MCF 10A (cell line): ENCODE measurements at regions of chr5 and their contacts with region 1.

Region 1: DNA sequence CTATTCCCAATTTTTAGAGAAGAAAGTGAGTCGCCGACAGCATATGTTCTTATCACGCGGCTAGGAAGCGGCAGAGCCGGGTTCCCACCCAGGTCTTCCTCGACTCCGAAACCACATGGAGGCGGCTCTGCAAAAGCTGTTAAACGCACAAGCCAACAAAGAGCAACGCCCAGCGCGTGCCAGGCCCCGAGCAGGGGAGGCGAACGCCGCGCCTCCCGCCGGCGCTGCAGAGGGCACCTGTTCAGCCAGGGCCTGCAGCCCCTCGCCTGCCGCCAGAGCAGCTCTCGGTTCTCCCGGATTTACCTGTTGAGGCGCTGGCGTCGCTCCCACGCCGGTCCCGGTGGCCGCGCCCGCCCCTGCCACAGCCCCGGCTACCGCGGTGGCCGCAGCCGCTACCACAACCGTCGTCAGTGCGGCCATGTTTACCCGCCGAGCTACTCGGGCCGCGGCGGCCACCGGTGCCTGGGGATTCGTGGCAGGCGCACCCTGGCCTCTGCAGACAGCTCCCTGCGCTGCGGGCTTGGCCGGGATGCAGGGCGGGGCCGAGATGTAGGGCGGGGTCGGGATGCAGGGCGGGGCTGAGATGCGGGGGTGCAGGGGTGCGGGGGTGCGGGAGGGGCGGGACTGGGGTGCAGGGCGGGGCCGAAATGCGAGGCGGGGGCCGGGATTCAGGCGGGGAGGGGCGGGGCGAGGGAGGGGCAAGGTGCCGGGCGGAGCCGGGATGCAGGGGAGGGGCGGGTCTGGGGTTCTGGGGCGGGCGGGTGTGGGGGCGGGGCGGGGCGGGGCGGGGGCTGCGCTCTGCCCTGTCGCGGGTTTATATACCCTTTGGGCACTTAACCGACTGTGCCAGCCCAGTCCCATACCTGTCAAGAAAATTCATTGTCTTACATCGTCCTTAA is at the start of gene CCDC112:
- DNase-seq: peak; percentile 84
- H3K4me3 Mint-ChIP-seq: peak within 1 kb of the TSS; percentile 78
- H3K27ac Mint-ChIP-seq: peak within 1 kb of the TSS; percentile 53
- H3K4me1 Mint-ChIP-seq: peaks cover 17% of the 10 kb centered on the region
- H3K27me3 Mint-ChIP-seq: no peaks in the 10 kb centered on the region
- CTCF ChIP-seq: no peak
- total RNA-seq, gene CCDC112: 10.3 and 10.7 TPM in 2 replicates

Region 2: GRCh38 chr5:115098041-115098702 is 198.2 kb before region 1 on chr5:
- CTCF ChIA-PET with region 1: interaction called, 4 read pairs
- POLR2A ChIA-PET with region 1: interaction called, 4 read pairs
- intact Hi-C with region 1: loop called (anchors 1 kb)
- DNase-seq: peak; percentile 62
- H3K4me3 Mint-ChIP-seq: no peak overlapping the region
- H3K27ac Mint-ChIP-seq: no peak overlapping the region
- H3K4me1 Mint-ChIP-seq: no peaks in the 10 kb centered on the region
- H3K27me3 Mint-ChIP-seq: no peaks in the 10 kb centered on the region
- CTCF ChIP-seq: peak; percentile 66

Region 3: DNA sequence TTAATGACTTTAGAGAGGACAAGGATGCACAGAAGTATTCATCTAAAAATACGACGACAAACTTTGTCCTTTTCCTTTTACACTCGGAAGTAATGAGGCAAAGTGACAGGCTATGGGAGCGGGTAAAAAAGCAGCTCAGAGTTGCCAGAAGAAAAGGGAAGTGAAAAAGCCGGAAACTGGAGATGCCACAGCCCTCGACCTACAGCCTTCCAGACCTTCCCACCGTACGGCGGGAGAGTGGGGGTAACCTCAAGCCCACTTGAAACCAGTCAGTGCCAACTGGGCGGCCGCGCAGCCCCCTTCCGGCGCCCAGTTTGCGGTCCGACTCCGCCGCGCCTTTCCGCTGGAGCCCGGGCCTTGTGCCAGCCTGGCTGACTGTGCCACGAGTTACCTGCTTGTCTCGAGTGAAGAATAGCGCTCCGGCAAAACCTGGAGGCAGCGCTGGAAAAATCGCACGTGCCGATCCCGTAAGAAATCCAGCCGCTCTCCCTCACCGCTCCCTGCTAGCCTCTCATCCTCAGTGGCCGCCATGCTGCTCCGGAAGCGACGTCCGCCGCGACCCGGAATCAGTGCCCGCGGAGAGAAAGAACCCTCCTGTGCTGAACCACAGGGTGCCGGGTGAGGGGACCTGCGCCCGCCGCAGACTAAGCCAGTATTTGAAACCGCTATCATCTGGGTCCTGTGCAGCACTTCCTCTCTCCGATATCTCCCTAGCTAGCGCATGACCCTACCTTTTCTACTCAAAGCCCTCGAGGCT is 33.9 kb before region 1 on chr5 and contains the start of gene PGGT1B:
- CTCF ChIA-PET with region 1: interaction called, 3 read pairs
- POLR2A ChIA-PET with region 1: interaction called, 19 read pairs
- intact Hi-C with region 1: no loop called
- DNase-seq: peak; percentile 66
- H3K4me3 Mint-ChIP-seq: peak within 1 kb of the TSS; percentile 83
- H3K27ac Mint-ChIP-seq: peak within 1 kb of the TSS; percentile 97
- H3K4me1 Mint-ChIP-seq: peaks cover 29% of the 10 kb centered on the region
- H3K27me3 Mint-ChIP-seq: no peaks in the 10 kb centered on the region
- CTCF ChIP-seq: no peak
- total RNA-seq, gene PGGT1B: 43.9 and 48.5 TPM in 2 replicates